Dorsolateral prefrontal cortex (tissue), 120 donors: ENCODE measurements at regions of chr22 and their contacts with region 1.

Region 1: DNA sequence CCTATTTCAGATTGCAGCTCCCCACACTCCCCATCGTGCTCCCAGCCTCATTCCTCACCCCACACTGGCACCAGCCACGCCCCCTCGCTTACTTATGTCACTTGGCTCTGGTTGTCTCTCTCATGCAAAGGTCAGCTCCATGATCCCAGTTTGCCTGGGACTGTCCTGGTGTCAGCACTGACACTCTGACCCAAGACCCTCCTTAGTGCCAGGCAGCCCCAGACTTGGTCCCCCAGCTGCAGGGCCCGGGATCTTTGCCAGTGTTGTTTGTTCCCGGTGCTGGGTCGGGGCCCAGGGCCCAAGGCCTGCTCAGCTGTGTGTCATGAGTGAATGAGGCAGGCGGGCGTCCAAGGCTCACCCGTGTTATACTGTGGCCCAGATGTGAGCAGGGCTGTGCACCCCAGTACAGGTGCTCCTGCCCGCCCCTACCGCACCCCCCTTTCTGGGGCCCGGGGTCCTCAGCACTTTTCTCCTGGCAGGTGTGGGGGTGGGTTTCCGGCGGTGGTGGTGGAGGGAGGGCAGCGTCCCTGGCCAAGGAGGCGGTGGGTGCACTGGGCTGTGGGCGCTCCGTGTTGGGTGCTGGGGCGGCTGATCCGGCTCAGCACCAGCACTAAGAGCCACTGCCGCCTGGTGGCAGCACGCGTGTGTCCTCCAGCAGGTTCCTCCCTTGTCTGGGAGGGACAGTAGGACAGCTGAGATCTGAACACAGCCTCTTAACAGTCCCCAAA is 19.5 kb downstream of the IL17REL start:
- DNase-seq: peak; percentile 27 to 96 (median 88)
- H3K4me3 ChIP-seq: peak overlapping the region in 13 of 59 donors; percentile 9 to 37 (median 17)
- H3K27ac ChIP-seq: peak overlapping the region; percentile 29 to 98 (median 91)
- H3K27me3 ChIP-seq: peaks cover 0 to 3% (median 0%) of the 10 kb centered on the region in 45 donors
- CTCF ChIP-seq: peak; percentile 29 to 87 (median 72)

Region 2: GRCh38 chr22:49861642-49862495 is 131.2 kb before region 1 on chr22:
- intact Hi-C with region 1: no loop called
- DNase-seq: peak in 1 of 10 donors; percentile 26
- H3K4me3 ChIP-seq: no peak overlapping the region
- H3K27ac ChIP-seq: peak overlapping the region in 2 of 59 donors; percentile 33 to 55
- H3K27me3 ChIP-seq: no peaks in the 10 kb centered on the region
- CTCF ChIP-seq: no peak

Region 3: DNA sequence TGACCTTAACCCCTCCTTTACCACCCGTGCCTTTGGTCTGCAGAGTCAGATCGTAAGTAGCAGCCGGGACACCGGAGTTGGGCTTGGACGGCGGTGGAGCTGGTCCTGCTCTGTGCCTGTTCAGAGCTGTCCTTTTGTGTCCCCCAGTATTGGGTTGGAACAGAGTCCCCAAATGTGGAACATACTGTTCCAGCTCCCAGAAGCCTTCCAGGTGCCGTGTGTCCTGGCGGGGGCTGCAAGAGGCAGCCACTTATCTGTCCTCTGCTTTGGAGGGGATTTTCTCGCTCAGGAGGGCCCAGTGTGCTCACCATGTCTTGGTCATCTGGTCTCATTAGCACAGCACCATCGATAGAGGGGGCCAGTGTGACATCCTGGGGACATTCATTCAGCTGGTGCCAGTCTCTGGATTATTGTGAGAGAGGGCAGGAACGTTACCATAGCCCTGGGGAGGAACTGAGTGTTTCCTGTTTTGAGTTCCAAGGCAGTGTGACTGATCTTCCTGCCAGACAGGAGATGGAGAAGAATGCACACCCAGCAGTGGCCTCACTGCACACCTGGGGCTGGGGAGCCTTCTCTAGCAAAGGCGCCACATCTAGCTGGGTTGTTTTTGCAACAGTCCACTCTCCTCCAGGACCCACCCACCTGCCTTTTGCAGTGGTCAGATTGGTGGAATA is 62.2 kb before region 1 on chr22:
- intact Hi-C with region 1: loop called (anchors 1 kb)
- DNase-seq: peak; percentile 41 to 86 (median 76)
- H3K4me3 ChIP-seq: no peak overlapping the region
- H3K27ac ChIP-seq: peak overlapping the region in 55 of 59 donors; percentile 7 to 86 (median 65)
- H3K27me3 ChIP-seq: no peaks in the 10 kb centered on the region
- CTCF ChIP-seq: peak; percentile 22 to 83 (median 74)